ENCODE measurements at regions of chr18 and their contacts with region 1.

Region 1: DNA sequence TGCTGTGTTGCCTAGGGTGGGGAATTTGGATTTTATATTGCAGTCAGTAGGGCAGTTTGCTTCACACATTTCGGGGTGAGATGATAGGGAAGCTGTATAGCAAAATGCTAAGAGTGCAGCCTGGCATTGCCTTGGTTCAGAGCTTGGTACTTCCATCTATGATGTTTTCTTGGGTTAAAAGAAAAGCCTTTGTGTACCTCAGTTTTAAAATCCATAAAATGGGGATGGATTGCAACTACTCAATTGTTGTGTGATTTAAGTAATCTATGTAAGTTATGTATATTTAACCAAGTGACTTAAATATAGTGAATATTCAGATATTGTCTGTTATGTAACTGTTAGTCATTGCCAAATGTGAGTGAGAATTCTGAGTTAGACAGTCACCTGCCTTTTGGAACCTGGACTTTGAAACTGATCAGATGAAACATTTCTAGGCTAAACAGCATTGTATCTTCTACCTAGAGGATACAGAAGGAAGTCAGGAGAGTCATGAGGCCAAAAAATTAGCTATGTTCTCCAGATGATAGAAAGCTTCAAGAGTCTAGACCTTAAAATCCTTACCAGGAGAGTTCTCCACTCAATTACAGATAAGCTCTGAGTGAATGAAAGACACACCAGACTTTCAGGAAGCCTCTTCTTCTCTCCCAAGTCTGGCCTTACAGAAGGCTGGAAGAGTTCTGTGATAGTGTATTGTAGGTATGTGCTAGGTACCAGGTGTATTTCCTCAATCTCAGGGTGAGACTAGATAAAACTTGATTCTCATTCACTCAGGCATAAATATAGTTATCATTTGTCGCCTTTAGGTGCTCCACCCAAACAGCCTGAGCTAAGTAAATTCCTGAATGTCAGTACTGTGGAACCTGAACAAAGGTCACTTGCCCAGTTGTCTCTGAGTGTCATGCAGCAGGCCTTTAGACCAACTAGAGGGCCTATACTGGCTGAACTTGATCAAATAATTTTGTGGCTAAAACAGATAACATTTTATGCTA is 7.5 kb downstream of the RIOK3 start:
- DNase-seq: no peak
- ATAC-seq: peak in 1 of 4 donors; percentile 56
- H3K4me3 ChIP-seq: no peak overlapping the region
- H3K27ac ChIP-seq: no peak overlapping the region
- H3K4me1 ChIP-seq: peaks cover 50% of the 10 kb centered on the region
- H3K27me3 ChIP-seq: no peaks in the 10 kb centered on the region
- CTCF ChIP-seq: no peak

Region 2: DNA sequence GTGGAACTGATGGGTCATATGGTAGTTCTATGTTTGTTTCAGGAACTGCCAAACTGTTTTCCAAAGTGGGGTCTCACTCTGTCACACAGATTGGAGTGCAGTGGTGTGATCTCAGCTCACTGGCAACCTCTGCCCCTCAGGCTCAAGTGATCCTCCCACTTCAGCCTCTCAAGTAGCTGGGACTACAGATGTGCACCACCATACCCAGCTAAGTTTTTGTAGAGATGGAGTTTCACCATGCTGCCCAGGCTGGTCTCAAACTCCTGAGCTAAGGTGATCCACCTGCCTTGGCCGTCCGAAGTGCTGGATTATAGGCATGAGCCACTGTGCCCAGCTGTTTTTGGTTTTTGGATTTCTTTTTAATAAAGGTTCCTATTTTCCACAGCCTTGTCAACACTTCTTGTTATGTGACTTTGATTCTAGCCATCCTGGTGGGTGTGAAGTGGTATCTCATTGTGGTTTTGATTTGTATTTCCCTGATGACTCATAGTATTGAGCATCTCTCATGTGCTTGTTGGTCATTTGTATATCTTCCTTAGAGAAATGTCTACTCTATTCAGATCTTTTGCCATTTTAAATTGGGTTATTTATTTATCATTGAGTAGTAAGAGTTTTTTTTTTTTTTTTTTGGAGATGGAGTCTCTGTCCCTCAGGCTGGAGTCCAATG is 102.9 kb after region 1 on chr18:
- intact Hi-C with region 1: loop called in 1 of 2 experiments (anchors 10 kb)
- DNase-seq: no peak
- ATAC-seq: no peak
- H3K4me3 ChIP-seq: no peak overlapping the region
- H3K27ac ChIP-seq: no peak overlapping the region
- H3K4me1 ChIP-seq: no peaks in the 10 kb centered on the region
- H3K27me3 ChIP-seq: no peaks in the 10 kb centered on the region
- CTCF ChIP-seq: no peak